Heart left ventricle (tissue), 16 donors: ENCODE measurements at regions of chr10 and their contacts with region 1.

Region 1: GRCh38 chr10:104614245-104614831 is 26.8 kb upstream of the SORCS3 start:
- DNase-seq: no peak
- ATAC-seq: no peak
- H3K4me3 ChIP-seq: no peak overlapping the region
- H3K27ac ChIP-seq: no peak overlapping the region
- H3K4me1 ChIP-seq: no peaks in the 10 kb centered on the region
- H3K27me3 ChIP-seq: peaks cover 0 to 17% (median 0%) of the 10 kb centered on the region in 9 donors
- CTCF ChIP-seq: peak in 8 of 12 donors; percentile 10 to 44 (median 27)
- POLR2A ChIP-seq: no peak

Region 2: GRCh38 chr10:104309976-104310674 is 304.2 kb before region 1 on chr10:
- intact Hi-C with region 1: no loop called
- DNase-seq: peak; percentile 77 to 90 (median 81)
- ATAC-seq: peak; percentile 79 to 87 (median 82)
- H3K4me3 ChIP-seq: peak overlapping the region in 1 of 12 donors; percentile 7
- H3K27ac ChIP-seq: peak overlapping the region; percentile 76 to 98 (median 90)
- H3K4me1 ChIP-seq: peaks cover 12 to 98% (median 63%) of the 10 kb centered on the region in 12 donors
- H3K27me3 ChIP-seq: no peaks in the 10 kb centered on the region
- CTCF ChIP-seq: peak in 2 of 12 donors; percentile 8 to 9
- POLR2A ChIP-seq: peak in 1 of 2 donors; percentile 13

Region 3: GRCh38 chr10:104406715-104407650 is 207.4 kb before region 1 on chr10:
- intact Hi-C with region 1: loop called in 2 of 10 experiments (anchors 10 kb)
- DNase-seq: no peak
- ATAC-seq: peak in 1 of 4 donors; percentile 57
- H3K4me3 ChIP-seq: no peak overlapping the region
- H3K27ac ChIP-seq: no peak overlapping the region
- H3K4me1 ChIP-seq: no peaks in the 10 kb centered on the region
- H3K27me3 ChIP-seq: no peaks in the 10 kb centered on the region
- CTCF ChIP-seq: peak; percentile 17 to 52 (median 37)
- POLR2A ChIP-seq: no peak

Region 4: GRCh38 chr10:104417637-104418296 is 196.6 kb before region 1 on chr10:
- intact Hi-C with region 1: loop called in 1 of 10 experiments (anchors 10 kb)
- DNase-seq: no peak
- ATAC-seq: no peak
- H3K4me3 ChIP-seq: no peak overlapping the region
- H3K27ac ChIP-seq: no peak overlapping the region
- H3K4me1 ChIP-seq: peaks cover 0 to 4% (median 0%) of the 10 kb centered on the region in 12 donors
- H3K27me3 ChIP-seq: no peaks in the 10 kb centered on the region
- CTCF ChIP-seq: no peak
- POLR2A ChIP-seq: no peak

Region 5: DNA sequence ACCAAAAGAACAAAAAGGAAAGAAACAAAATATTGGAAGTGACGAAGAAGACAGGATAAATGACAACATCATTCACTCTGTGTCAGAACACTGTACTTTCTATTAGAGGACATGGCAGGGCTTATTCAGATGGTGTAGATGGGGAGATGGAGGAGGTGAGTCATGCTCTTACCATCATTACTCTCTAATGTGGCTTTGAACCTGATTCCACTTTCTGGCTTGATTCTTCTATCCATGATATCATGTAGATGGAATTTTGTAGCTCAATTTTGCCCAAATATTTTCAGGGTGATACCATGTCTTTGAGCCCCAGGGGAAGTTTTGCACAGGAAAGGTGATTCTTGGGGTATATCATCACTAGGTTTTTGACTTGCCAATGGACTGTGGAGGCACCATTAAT is 169.0 kb before region 1 on chr10:
- intact Hi-C with region 1: no loop called
- DNase-seq: no peak
- ATAC-seq: no peak
- H3K4me3 ChIP-seq: no peak overlapping the region
- H3K27ac ChIP-seq: no peak overlapping the region
- H3K4me1 ChIP-seq: no peaks in the 10 kb centered on the region
- H3K27me3 ChIP-seq: no peaks in the 10 kb centered on the region
- CTCF ChIP-seq: no peak
- POLR2A ChIP-seq: no peak

Region 6: GRCh38 chr10:104657457-104657856 is 43.1 kb after region 1 on chr10:
- intact Hi-C with region 1: no loop called
- DNase-seq: no peak
- ATAC-seq: no peak
- H3K4me3 ChIP-seq: no peak overlapping the region
- H3K27ac ChIP-seq: no peak overlapping the region
- H3K4me1 ChIP-seq: no peaks in the 10 kb centered on the region
- H3K27me3 ChIP-seq: peaks cover 0 to 14% (median 0%) of the 10 kb centered on the region in 9 donors
- CTCF ChIP-seq: no peak
- POLR2A ChIP-seq: no peak

Region 7: DNA sequence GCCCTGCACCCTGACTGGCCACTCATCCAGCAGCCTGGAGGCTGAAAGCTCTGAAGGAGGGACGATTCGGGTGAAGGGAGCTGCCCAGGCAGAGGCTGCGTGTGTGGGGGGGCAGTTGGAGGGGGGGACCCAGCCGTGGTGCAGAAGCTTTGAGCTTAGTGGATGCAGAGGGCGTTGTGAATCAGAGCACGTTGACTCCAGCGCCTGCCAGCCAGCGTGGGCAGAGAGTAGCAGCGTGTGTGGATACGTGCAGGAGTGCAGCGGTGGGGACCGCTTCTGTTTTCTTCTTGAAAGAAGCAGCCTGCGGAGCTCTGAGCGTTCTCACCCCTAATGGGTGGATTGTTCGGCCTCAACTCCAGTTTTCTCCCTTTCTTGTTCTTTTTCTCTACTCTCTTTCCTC is 73.9 kb after region 1 on chr10:
- intact Hi-C with region 1: no loop called
- DNase-seq: no peak
- ATAC-seq: no peak
- H3K4me3 ChIP-seq: no peak overlapping the region
- H3K27ac ChIP-seq: no peak overlapping the region
- H3K4me1 ChIP-seq: no peaks in the 10 kb centered on the region
- H3K27me3 ChIP-seq: peaks cover 0 to 5% (median 0%) of the 10 kb centered on the region in 9 donors
- CTCF ChIP-seq: no peak
- POLR2A ChIP-seq: no peak